ENCODE measurements at regions of chr9 and their contacts with region 1.

Region 1: DNA sequence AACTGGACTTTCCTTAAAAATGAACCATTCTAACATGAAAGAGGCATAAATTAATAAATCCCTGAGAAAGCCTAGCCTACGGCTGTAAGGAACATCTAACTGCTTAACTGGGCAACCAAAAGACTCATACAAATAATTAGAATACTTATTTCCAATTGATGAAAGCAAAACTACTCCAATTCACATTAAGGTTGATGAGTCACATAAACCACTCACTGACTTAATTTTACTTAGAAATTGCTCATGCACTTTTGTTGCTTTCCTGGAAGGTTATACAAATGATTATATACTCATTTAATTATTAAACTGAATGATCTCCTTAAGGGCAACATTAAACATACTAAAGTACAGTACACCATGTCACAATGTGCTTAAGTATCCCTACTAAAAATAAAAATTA is 101.9 kb downstream of the NFIB start:
- DNase-seq: no peak
- ATAC-seq: no peak
- H3K4me3 ChIP-seq: no peak overlapping the region
- H3K27ac ChIP-seq: no peak overlapping the region
- H3K4me1 ChIP-seq: no peaks in the 10 kb centered on the region
- H3K27me3 ChIP-seq: peaks cover 0 to 8% of the 10 kb centered on the region in 2 experiments; a peak in 1 of 5 replicates
- CTCF ChIP-seq: no peak
- EP300 ChIP-seq: no peak
- POLR2A ChIP-seq: no peak
- RAD21 ChIP-seq: no peak

Region 2: GRCh38 chr9:14159440-14160216 is 52.4 kb before region 1 on chr9:
- CTCF ChIA-PET with region 1: no interaction called
- POLR2A ChIA-PET with region 1: no interaction called
- in situ Hi-C with region 1: no loop called
- intact Hi-C with region 1: loop called (anchors 10 kb)
- DNase-seq: no peak
- ATAC-seq: no peak
- H3K4me3 ChIP-seq: no peak overlapping the region
- H3K27ac ChIP-seq: no peak overlapping the region
- H3K4me1 ChIP-seq: no peaks in the 10 kb centered on the region
- H3K27me3 ChIP-seq: no peaks in the 10 kb centered on the region
- CTCF ChIP-seq: no peak
- EP300 ChIP-seq: no peak
- POLR2A ChIP-seq: no peak
- RAD21 ChIP-seq: no peak

Measured in K562 (cell line).